Activated CD4-positive, alpha-beta T cell treated with anti-CD3 and anti-CD28 coated beads for 36 hours (primary cell): ENCODE measurements at regions of chr3 and their contacts with region 1.

Region 1: DNA sequence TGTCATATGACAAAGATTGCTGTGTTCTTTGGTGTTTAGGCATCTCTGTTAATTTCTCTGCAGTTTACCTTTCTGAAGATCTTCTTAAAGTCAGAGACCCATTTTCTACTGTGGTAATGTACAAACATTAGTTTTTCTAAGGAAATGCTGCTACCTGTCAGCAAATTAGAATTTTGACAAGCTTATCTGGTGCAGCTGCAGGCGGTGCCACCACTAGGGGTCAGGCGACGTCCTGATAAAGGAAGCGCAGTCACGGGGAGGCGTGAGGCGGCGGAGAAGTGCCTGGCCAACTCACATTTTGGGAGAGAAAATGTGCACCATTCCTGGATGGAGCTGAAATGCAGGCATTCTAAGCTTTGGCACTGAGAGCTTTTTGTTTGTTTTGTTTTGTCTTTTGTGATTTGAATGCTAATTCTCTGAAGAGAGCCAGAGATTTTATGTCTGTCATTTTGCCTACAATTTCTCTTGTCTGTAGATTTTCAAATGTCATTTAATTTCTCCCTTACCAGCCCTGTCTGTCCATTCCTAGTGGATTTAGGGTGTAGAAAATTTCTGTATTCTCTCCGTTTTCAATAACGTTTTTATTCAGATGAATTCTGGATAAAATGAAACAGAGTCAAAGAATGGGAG is 24.9 kb upstream of the SIAH2 start:
- DNase-seq: peak; percentile 94
- ATAC-seq: peak; percentile 50
- H3K4me3 Mint-ChIP-seq: peak overlapping the region; percentile 23
- H3K27ac Mint-ChIP-seq: peak overlapping the region; percentile 55
- H3K4me1 Mint-ChIP-seq: peaks cover 47% of the 10 kb centered on the region
- H3K27me3 Mint-ChIP-seq: peaks cover 10% of the 10 kb centered on the region

Region 2: DNA sequence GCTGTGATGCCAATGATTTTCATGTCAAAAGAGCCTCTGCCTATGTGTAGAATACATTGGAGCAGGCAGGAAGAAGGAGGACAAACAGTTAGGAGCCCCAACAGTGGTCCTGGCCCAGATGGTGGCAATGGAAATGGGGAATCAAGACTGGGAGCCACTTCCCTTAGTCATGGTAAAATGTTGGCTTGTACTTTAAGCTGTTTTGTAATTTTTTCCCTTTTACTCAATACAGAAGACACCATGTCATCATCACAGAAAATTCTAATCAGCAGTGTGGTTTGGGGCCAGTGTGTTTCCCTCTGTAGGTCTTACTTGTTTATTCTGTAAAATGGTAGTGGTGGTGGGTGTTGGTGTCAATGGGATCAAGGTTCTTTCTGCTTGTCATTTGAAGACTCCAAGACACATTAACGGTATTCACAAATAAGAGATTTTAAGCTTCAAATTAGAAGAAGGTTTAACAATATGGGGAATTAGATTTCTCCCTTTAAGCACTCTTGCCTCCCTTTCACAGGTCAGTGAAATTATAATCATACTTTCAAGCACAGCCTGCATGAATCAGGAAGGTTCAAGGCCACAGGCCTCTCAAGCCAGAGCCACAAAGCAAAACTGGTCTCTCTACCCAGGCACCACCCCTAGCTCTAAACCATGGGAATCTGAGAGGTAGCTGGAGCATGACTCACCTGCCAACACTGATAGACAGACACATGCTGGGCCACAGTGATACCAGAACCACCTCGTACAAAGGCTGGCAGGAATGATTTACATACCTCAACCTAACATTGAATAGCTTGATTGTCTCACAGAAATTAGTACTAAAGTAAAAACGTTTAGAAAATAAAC is 49.8 kb before region 1 on chr3:
- CTCF ChIA-PET with region 1: interaction called, 9 read pairs
- POLR2A ChIA-PET with region 1: interaction called, 10 read pairs
- intact Hi-C with region 1: loop called (anchors 1 kb)
- DNase-seq: peak; percentile 77
- ATAC-seq: peak; percentile 73
- H3K4me3 Mint-ChIP-seq: peak overlapping the region; percentile 40
- H3K27ac Mint-ChIP-seq: peak overlapping the region; percentile 93
- H3K4me1 Mint-ChIP-seq: peaks cover 72% of the 10 kb centered on the region
- H3K27me3 Mint-ChIP-seq: no peaks in the 10 kb centered on the region

Region 3: DNA sequence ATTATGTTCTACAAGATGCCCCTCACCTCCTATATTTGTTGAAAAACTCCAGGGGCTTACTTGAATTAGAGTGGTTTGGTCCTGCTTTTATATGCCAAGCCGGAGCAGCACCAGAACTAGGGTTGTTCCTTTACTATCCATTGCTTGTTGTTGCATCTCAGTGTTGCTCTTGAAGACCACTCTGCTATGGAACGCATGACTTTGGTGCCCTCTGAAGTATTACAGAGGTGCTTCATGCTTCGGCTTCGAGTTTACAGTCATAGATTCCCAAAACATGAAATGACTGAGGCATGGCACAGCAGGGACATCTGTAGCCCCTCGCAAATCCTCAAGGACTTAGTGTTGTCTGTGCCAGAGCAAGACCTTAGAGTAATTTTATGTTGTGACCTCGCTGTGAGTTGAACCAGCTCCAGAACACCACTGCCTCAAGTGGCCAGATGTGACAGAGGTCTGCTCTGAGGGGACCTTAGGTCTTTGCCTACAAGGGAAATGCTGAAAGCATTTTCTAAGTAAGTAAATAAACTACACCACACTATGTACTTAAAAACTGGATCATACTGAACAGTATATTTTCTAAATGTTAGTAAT is 42.3 kb after region 1 on chr3:
- CTCF ChIA-PET with region 1: interaction called, 10 read pairs
- POLR2A ChIA-PET with region 1: no interaction called
- intact Hi-C with region 1: no loop called
- DNase-seq: peak; percentile 33
- ATAC-seq: peak; percentile 60
- H3K4me3 Mint-ChIP-seq: no peak overlapping the region
- H3K27ac Mint-ChIP-seq: no peak overlapping the region
- H3K4me1 Mint-ChIP-seq: no peaks in the 10 kb centered on the region
- H3K27me3 Mint-ChIP-seq: peaks cover 2% of the 10 kb centered on the region

Region 4: DNA sequence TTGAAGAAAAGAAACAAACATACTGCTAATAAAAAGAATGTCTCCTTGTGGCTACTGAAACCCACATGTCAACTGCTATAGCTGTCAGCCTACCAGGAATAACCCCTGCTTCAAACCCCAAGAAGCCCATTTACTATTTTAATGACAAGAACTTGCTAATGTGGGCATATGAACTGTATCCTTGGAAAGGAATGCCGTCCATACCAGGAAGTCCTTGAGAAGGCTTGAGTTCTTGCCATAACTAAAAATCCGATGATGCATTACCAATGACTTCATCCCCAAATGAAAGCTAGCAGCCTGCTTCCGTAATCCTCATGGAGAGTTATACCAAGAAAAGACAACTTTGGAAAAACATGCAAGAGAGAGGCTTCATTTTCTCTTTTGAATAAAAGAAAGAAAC is 82.5 kb after region 1 on chr3:
- CTCF ChIA-PET with region 1: interaction called, 28 read pairs
- POLR2A ChIA-PET with region 1: no interaction called
- intact Hi-C with region 1: loop called (anchors 1 to 2 kb)
- DNase-seq: no peak
- ATAC-seq: no peak
- H3K4me3 Mint-ChIP-seq: no peak overlapping the region
- H3K27ac Mint-ChIP-seq: no peak overlapping the region
- H3K4me1 Mint-ChIP-seq: peaks cover 2% of the 10 kb centered on the region
- H3K27me3 Mint-ChIP-seq: peaks cover 15% of the 10 kb centered on the region

Region 5: GRCh38 chr3:151146071-151146730 is 358.3 kb after region 1 on chr3:
- CTCF ChIA-PET with region 1: interaction called, 4 read pairs
- POLR2A ChIA-PET with region 1: no interaction called
- intact Hi-C with region 1: loop called (anchors 2 to 5 kb)
- DNase-seq: peak; percentile 74
- ATAC-seq: peak; percentile 97
- H3K4me3 Mint-ChIP-seq: no peak overlapping the region
- H3K27ac Mint-ChIP-seq: no peak overlapping the region
- H3K4me1 Mint-ChIP-seq: no peaks in the 10 kb centered on the region
- H3K27me3 Mint-ChIP-seq: peaks cover 3% of the 10 kb centered on the region

Region 6: GRCh38 chr3:151305101-151305750 is 517.4 kb after region 1 on chr3:
- CTCF ChIA-PET with region 1: no interaction called
- POLR2A ChIA-PET with region 1: no interaction called
- intact Hi-C with region 1: loop called in 1 of 2 experiments (anchors 5 kb)
- DNase-seq: peak; percentile 51
- ATAC-seq: peak; percentile 80
- H3K4me3 Mint-ChIP-seq: peak overlapping the region; percentile 40
- H3K27ac Mint-ChIP-seq: peak overlapping the region; percentile 69
- H3K4me1 Mint-ChIP-seq: peaks cover 78% of the 10 kb centered on the region
- H3K27me3 Mint-ChIP-seq: peaks cover 14% of the 10 kb centered on the region

Region 7: DNA sequence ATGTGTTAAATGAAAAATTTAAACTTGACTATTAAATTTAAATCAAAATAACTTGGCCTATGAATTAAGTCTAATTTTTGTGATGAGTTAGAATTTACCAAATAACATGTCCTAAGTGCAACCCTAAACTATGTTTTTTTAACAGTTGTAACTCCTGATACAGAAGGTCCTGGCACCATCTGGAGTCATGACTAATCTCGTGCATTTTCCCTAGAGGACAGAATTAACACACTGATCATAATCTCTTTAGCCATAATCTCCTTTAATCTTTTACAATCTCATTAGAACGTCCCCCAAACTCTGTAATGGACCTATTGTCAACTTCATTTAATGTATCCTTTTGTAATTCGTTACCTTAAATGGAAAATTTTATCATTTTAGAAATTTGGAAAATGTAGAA is 1186.2 kb after region 1 on chr3:
- CTCF ChIA-PET with region 1: no interaction called
- POLR2A ChIA-PET with region 1: no interaction called
- intact Hi-C with region 1: no loop called
- DNase-seq: no peak
- ATAC-seq: no peak
- H3K4me3 Mint-ChIP-seq: no peak overlapping the region
- H3K27ac Mint-ChIP-seq: no peak overlapping the region
- H3K4me1 Mint-ChIP-seq: no peaks in the 10 kb centered on the region
- H3K27me3 Mint-ChIP-seq: no peaks in the 10 kb centered on the region

Region 8: GRCh38 chr3:152539191-152539768 is 1751.4 kb after region 1 on chr3:
- CTCF ChIA-PET with region 1: no interaction called
- POLR2A ChIA-PET with region 1: no interaction called
- intact Hi-C with region 1: no loop called
- DNase-seq: no peak
- ATAC-seq: no peak
- H3K4me3 Mint-ChIP-seq: no peak overlapping the region
- H3K27ac Mint-ChIP-seq: no peak overlapping the region
- H3K4me1 Mint-ChIP-seq: no peaks in the 10 kb centered on the region
- H3K27me3 Mint-ChIP-seq: peaks cover 23% of the 10 kb centered on the region